ENCODE measurements at regions of chr1 and their contacts with region 1.

Region 1: GRCh38 chr1:151281969-151282882 is at the start of gene ZNF687:
- DNase-seq: peak; percentile 100
- H3K4me3 ChIP-seq: peak within 1 kb of the TSS; percentile 75 to 86 (median 85)
- H3K27ac ChIP-seq: peak within 1 kb of the TSS; percentile 97
- H3K4me1 ChIP-seq: peaks cover 16% of the 10 kb centered on the region
- H3K27me3 ChIP-seq: no peaks in the 10 kb centered on the region
- CTCF ChIP-seq: no peak
- total RNA-seq, gene ZNF687: 17.7 to 23.3 TPM

Region 2: GRCh38 chr1:150352866-150353265 is 929.4 kb before region 1 on chr1:
- CTCF ChIA-PET with region 1: no interaction called
- dilution Hi-C with region 1: no loop called
- in situ Hi-C with region 1: no loop called
- intact Hi-C with region 1: no loop called
- DNase-seq: no peak
- H3K4me3 ChIP-seq: no peak overlapping the region
- H3K27ac ChIP-seq: no peak overlapping the region
- H3K4me1 ChIP-seq: no peaks in the 10 kb centered on the region
- H3K27me3 ChIP-seq: no peaks in the 10 kb centered on the region
- CTCF ChIP-seq: no peak

Region 3: DNA sequence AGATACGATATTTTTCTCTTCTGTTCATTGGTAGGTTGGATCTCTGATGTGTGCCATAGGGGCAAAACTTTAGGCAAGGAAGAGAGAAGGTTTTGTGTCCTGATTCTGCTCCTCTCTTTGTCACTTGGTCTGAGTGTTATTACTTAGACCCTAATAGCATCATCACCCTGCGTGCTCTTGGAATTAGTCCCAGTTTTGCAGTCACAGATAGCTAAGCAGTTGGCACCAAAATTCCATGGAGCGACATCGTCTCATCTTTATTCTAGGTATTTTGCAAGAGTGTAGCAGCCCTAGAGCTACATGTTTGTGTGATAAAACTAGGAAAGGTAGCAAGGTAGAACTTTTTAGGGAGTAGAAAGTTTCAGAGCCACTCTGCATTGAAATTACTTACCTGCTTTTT is 60.1 kb before region 1 on chr1:
- CTCF ChIA-PET with region 1: no interaction called
- dilution Hi-C with region 1: no loop called
- in situ Hi-C with region 1: no loop called
- intact Hi-C with region 1: no loop called
- DNase-seq: no peak
- H3K4me3 ChIP-seq: no peak overlapping the region
- H3K27ac ChIP-seq: no peak overlapping the region
- H3K4me1 ChIP-seq: peaks cover 4% of the 10 kb centered on the region
- H3K27me3 ChIP-seq: no peaks in the 10 kb centered on the region
- CTCF ChIP-seq: no peak

Region 4: DNA sequence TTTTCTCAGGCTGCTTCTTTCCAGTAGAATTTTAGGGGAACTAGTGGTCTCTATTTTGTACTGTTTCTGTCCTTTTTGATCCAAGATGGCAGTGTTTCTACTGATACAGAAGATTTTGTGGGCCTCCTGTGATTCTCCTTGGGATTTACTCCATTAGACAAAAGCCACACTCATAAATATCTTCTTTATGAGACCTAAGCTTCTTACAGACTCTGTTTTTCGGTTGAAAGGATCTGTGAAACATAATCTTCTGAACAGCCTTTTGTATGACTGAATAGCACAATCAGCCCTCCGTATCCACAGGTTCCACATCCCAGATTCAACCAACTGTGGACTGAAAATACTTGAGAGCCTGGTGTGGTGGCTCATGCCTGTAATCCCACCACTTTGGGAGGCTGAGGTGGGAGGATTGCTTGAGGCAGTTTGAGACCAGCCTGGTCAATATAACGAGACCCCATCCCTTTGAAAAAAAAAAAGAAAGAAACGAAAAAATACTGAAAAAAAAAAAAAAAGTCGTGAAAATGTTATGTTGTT is 38.5 kb before region 1 on chr1:
- CTCF ChIA-PET with region 1: no interaction called
- dilution Hi-C with region 1: loop called (anchors 5 kb)
- in situ Hi-C with region 1: no loop called
- intact Hi-C with region 1: no loop called
- DNase-seq: no peak
- H3K4me3 ChIP-seq: no peak overlapping the region
- H3K27ac ChIP-seq: no peak overlapping the region
- H3K4me1 ChIP-seq: no peaks in the 10 kb centered on the region
- H3K27me3 ChIP-seq: no peaks in the 10 kb centered on the region
- CTCF ChIP-seq: no peak

Region 5: DNA sequence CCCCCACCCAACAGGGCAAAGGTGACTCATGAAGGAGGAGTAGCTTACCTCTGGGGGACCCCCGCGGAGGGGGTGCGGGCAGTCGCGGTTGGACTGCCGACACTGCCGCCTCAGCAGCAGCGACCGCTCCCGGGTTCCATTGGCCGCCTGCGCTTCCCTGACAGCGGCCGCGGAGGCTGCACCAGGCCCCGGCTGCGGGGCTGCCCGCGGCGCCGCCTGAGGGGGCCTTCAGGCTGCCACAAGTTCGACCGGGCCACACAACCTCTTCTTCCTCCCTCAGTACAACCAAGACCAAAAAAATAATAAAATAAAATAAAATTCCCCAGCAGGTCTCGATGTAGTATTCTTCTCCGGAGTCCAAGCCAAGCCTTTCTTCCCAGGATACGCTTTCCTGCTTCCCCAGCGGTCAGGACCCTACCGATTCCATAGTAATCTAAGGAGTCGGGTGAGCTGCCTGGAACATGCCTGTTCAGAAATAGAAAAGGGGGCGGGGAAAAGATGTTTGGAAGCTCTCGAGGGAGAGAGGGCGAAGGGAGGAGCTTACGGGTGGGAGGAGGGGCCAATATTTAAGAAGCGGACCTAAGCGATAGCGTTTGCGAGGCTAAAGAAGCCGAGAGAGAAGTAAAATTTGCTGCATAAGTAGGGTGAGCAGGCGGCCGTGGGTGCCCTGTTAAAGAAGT is 45.1 kb after region 1 on chr1 and contains the start of gene PI4KB:
- CTCF ChIA-PET with region 1: no interaction called
- dilution Hi-C with region 1: loop called (anchors 10 kb)
- in situ Hi-C with region 1: no loop called
- intact Hi-C with region 1: loop called (anchors 1 kb)
- DNase-seq: peak; percentile 97
- H3K4me3 ChIP-seq: peak within 1 kb of the TSS; percentile 75 to 83 (median 79)
- H3K27ac ChIP-seq: peak within 1 kb of the TSS; percentile 93
- H3K4me1 ChIP-seq: peaks cover 15% of the 10 kb centered on the region
- H3K27me3 ChIP-seq: no peaks in the 10 kb centered on the region
- CTCF ChIP-seq: no peak
- total RNA-seq, gene PI4KB: 46.7 to 58.3 TPM

Region 6: GRCh38 chr1:151399890-151400495 is 117.8 kb after region 1 on chr1:
- CTCF ChIA-PET with region 1: no interaction called
- dilution Hi-C with region 1: no loop called
- in situ Hi-C with region 1: no loop called
- intact Hi-C with region 1: loop called (anchors 1 kb)
- DNase-seq: peak; percentile 20
- H3K4me3 ChIP-seq: peak overlapping the region; percentile 64 to 85 (median 80)
- H3K27ac ChIP-seq: peak overlapping the region; percentile 88
- H3K4me1 ChIP-seq: peaks cover 13% of the 10 kb centered on the region
- H3K27me3 ChIP-seq: no peaks in the 10 kb centered on the region
- CTCF ChIP-seq: no peak

Region 7: GRCh38 chr1:151539990-151540981 is 258.1 kb after region 1 on chr1 and contains the start of gene TUFT1:
- CTCF ChIA-PET with region 1: no interaction called
- dilution Hi-C with region 1: no loop called
- in situ Hi-C with region 1: no loop called
- intact Hi-C with region 1: loop called (anchors 1 kb)
- DNase-seq: peak; percentile 90
- H3K4me3 ChIP-seq: peak within 1 kb of the TSS; percentile 72 to 76 (median 76)
- H3K27ac ChIP-seq: peak within 1 kb of the TSS; percentile 66
- H3K4me1 ChIP-seq: peaks cover 40% of the 10 kb centered on the region
- H3K27me3 ChIP-seq: no peaks in the 10 kb centered on the region
- CTCF ChIP-seq: no peak
- total RNA-seq, gene TUFT1: 43.3 to 59.0 TPM

Measured in mammary epithelial cell (primary cell).